WTC11 (cell line): ENCODE measurements at regions of chr11 and their contacts with region 1.

Region 1: GRCh38 chr11:44095506-44096394 is at the start of gene EXT2:
- DNase-seq: peak; percentile 91
- ATAC-seq: peak; percentile 89
- H3K4me3 Mint-ChIP-seq: peak within 1 kb of the TSS; percentile 75
- H3K27ac Mint-ChIP-seq: no peak within 1 kb of the TSS
- H3K4me1 Mint-ChIP-seq: peaks cover 16% of the 10 kb centered on the region
- H3K27me3 Mint-ChIP-seq: peaks cover 3% of the 10 kb centered on the region
- CTCF ChIP-seq: peak; percentile 70
- total RNA-seq, gene EXT2: 36.4 to 39.1 TPM (median 38.6 TPM) in 3 replicates

Region 2: DNA sequence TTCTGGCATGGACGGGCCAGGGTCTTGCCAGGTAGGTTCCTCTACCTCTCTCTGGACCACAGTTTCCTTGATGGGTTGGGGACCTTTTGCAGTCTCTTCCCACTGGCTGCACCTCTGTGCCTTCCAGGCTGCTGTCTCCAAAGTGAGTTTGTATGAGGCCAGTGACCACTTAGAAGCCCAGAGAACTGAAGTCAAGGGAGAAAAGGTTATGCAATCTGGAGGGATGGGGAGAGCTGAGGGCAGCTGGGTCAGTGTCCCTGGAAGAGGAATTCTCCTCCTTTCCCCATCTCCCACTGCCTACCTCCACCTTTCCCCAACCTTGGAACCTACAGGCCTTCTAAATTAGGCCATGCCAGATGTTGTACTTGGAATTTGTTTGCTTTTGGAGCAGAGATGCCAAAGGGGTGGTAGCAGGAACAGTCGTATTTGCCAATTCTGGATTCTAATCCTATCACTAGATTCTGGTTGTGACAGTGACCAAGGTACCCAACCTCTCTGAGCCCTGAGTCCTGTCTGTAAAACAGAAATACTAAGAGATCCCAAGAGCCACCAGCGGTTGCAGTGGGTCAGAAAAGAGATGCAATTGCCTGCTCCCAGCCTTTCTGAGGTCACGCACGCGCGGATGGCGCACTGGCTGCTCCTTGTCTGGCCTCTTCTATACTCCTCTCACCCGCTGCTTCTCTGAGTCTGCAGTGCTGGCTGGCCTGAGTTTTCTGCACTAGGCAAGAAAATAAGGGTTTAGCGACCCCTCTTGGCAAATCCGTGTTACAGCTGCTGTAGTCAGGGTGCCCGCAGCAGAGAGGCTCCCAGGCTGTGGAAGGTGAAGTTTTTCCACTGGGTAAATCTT is 58.7 kb before region 1 on chr11:
- CTCF ChIA-PET with region 1: no interaction called
- POLR2A ChIA-PET with region 1: no interaction called
- DNase-seq: peak; percentile 81
- ATAC-seq: peak; percentile 98
- H3K4me3 Mint-ChIP-seq: no peak overlapping the region
- H3K27ac Mint-ChIP-seq: no peak overlapping the region
- H3K4me1 Mint-ChIP-seq: no peaks in the 10 kb centered on the region
- H3K27me3 Mint-ChIP-seq: peaks cover 2% of the 10 kb centered on the region
- CTCF ChIP-seq: peak; percentile 48; the same call in 1 of the 2 replicates

Region 3: GRCh38 chr11:44065841-44066731 is 29.7 kb before region 1 on chr11 and contains the start of gene ACCS:
- CTCF ChIA-PET with region 1: interaction called, 19 read pairs
- POLR2A ChIA-PET with region 1: no interaction called
- DNase-seq: peak; percentile 88
- ATAC-seq: peak; percentile 87
- H3K4me3 Mint-ChIP-seq: peak within 1 kb of the TSS; percentile 76
- H3K27ac Mint-ChIP-seq: peak within 1 kb of the TSS; percentile 82
- H3K4me1 Mint-ChIP-seq: peaks cover 33% of the 10 kb centered on the region
- H3K27me3 Mint-ChIP-seq: peaks cover 10% of the 10 kb centered on the region
- CTCF ChIP-seq: peak; percentile 62
- total RNA-seq, gene ACCS: 10.5 to 14.5 TPM (median 13.9 TPM) in 3 replicates

Region 4: GRCh38 chr11:44071157-44071556 is 24.6 kb before region 1 on chr11:
- CTCF ChIA-PET with region 1: interaction called, 19 read pairs
- POLR2A ChIA-PET with region 1: no interaction called
- DNase-seq: peak; percentile 36
- ATAC-seq: peak; percentile 64
- H3K4me3 Mint-ChIP-seq: no peak overlapping the region
- H3K27ac Mint-ChIP-seq: no peak overlapping the region
- H3K4me1 Mint-ChIP-seq: peaks cover 14% of the 10 kb centered on the region
- H3K27me3 Mint-ChIP-seq: peaks cover 10% of the 10 kb centered on the region
- CTCF ChIP-seq: 0 out of 2 replicates have a peak, but pooled peaks have one; percentile 12

Region 5: DNA sequence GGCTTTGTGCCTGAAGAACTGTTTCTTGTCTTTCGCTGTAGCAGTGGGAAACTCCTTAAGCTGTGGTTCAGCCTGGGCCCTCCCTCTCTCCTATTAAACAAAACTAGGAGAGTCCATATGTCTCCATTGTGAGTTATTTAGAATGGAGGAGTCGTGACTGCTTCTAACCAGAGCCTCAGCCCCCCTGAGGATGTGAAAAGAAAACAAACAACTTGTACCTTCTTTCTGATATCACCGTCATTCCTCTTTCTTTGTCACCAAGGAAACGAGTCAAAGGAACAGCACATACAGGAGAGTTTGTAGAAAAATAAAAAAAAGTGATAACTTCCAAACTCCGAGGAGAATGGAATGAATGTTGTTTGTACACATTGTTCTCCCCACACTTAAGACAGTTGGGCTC is 11.8 kb before region 1 on chr11:
- CTCF ChIA-PET with region 1: interaction called, 14 read pairs
- POLR2A ChIA-PET with region 1: no interaction called
- DNase-seq: no peak
- ATAC-seq: no peak
- H3K4me3 Mint-ChIP-seq: no peak overlapping the region
- H3K27ac Mint-ChIP-seq: no peak overlapping the region
- H3K4me1 Mint-ChIP-seq: no peaks in the 10 kb centered on the region
- H3K27me3 Mint-ChIP-seq: peaks cover 6% of the 10 kb centered on the region
- CTCF ChIP-seq: no peak

Region 6: DNA sequence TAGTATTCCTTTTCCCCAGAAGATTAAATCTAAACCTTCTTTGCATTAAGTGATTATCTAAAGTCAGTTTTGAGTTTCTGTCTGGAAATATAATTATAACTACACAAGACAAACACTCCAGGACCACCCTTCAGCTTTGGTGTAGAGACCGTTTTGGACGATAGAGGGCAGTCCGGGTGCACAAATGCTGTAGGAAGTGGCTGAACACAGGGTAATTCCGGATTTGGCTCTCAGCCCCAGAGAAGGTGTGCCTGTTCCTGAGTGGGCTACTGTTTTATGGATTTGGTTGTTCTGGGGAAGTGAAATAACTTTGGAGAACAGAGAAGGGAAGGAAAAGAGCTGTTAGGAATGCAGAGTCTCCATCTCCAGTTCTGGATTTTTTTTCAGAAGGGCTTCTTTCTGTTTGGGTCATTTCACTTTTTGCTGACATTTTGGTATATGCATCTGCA is 14.5 kb after region 1 on chr11:
- CTCF ChIA-PET with region 1: interaction called, 74 read pairs
- POLR2A ChIA-PET with region 1: no interaction called
- DNase-seq: peak; percentile 64
- ATAC-seq: peak; percentile 87
- H3K4me3 Mint-ChIP-seq: no peak overlapping the region
- H3K27ac Mint-ChIP-seq: no peak overlapping the region
- H3K4me1 Mint-ChIP-seq: peaks cover 9% of the 10 kb centered on the region
- H3K27me3 Mint-ChIP-seq: no peaks in the 10 kb centered on the region
- CTCF ChIP-seq: peak; percentile 61; the same call in 1 of the 2 replicates

Region 7: GRCh38 chr11:44120169-44120568 is 24.4 kb after region 1 on chr11:
- CTCF ChIA-PET with region 1: interaction called, 25 read pairs
- POLR2A ChIA-PET with region 1: no interaction called
- DNase-seq: no peak
- ATAC-seq: peak; percentile 71
- H3K4me3 Mint-ChIP-seq: no peak overlapping the region
- H3K27ac Mint-ChIP-seq: no peak overlapping the region
- H3K4me1 Mint-ChIP-seq: no peaks in the 10 kb centered on the region
- H3K27me3 Mint-ChIP-seq: no peaks in the 10 kb centered on the region
- CTCF ChIP-seq: no peak

Region 8: DNA sequence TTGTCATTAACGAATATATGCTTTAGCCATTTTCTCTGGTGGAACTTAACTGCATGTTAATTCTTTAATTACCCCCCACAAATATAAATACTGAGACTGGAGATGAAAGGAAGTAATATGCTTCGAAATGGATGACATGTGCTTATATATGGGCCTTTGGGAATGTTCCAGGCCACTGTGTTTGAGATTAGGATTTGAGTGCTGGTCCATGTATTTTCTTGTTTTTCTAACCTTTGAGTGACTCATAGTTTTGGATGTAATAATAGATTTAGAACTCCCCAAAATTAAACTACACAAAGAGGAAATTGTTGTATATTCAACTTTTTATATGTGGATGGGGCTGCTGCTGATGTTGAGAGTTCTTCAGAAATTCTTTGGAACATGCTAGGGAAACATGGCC is 53.9 kb after region 1 on chr11:
- CTCF ChIA-PET with region 1: no interaction called
- POLR2A ChIA-PET with region 1: no interaction called
- DNase-seq: no peak
- ATAC-seq: no peak
- H3K4me3 Mint-ChIP-seq: no peak overlapping the region
- H3K27ac Mint-ChIP-seq: no peak overlapping the region
- H3K4me1 Mint-ChIP-seq: no peaks in the 10 kb centered on the region
- H3K27me3 Mint-ChIP-seq: no peaks in the 10 kb centered on the region
- CTCF ChIP-seq: no peak

Region 9: DNA sequence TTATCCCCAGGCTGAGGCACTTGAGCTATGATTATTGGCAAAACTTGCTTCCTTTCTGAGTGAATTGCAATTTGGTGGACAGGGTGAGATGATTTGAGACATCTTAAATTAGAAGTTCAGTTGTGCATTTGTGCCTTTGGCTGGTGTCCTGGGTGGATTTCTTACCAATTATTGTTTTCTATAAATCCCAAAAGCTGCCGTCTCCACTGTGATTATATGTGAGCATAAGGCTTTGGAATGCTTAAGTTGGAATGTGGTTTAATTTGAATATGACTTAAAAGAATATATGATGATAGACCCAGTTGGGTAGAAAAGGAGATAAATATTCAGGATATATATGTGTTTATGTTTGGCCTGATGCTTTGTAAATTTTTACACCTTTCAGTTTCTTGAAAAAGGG is 69.7 kb after region 1 on chr11:
- CTCF ChIA-PET with region 1: no interaction called
- POLR2A ChIA-PET with region 1: no interaction called
- DNase-seq: no peak
- ATAC-seq: no peak
- H3K4me3 Mint-ChIP-seq: no peak overlapping the region
- H3K27ac Mint-ChIP-seq: no peak overlapping the region
- H3K4me1 Mint-ChIP-seq: peaks cover 4% of the 10 kb centered on the region; the same call in 1 of the 2 replicates
- H3K27me3 Mint-ChIP-seq: no peaks in the 10 kb centered on the region
- CTCF ChIP-seq: no peak